WTC11 (cell line): ENCODE measurements at regions of chr2 and their contacts with region 1.

Region 1: GRCh38 chr2:118046634-118047210 is 32.9 kb upstream of the CCDC93 start:
- DNase-seq: no peak
- ATAC-seq: 0 out of 2 replicates have a peak, but pooled peaks have one; percentile 34
- H3K4me3 Mint-ChIP-seq: no peak overlapping the region
- H3K27ac Mint-ChIP-seq: no peak overlapping the region
- H3K4me1 Mint-ChIP-seq: peaks cover 10% of the 10 kb centered on the region
- H3K27me3 Mint-ChIP-seq: peaks cover 5% of the 10 kb centered on the region; the same call in 1 of the 2 replicates
- CTCF ChIP-seq: peak; percentile 33; the same call in 1 of the 2 replicates

Region 2: GRCh38 chr2:118032169-118033013 is 14.3 kb before region 1 on chr2:
- CTCF ChIA-PET with region 1: interaction called, 38 read pairs
- POLR2A ChIA-PET with region 1: no interaction called
- DNase-seq: peak; percentile 38
- ATAC-seq: peak; percentile 74
- H3K4me3 Mint-ChIP-seq: no peak overlapping the region
- H3K27ac Mint-ChIP-seq: no peak overlapping the region
- H3K4me1 Mint-ChIP-seq: peaks cover 9% of the 10 kb centered on the region
- H3K27me3 Mint-ChIP-seq: peaks cover 21% of the 10 kb centered on the region
- CTCF ChIP-seq: peak; percentile 77

Region 3: GRCh38 chr2:118061135-118061955 is 14.6 kb after region 1 on chr2:
- CTCF ChIA-PET with region 1: interaction called, 19 read pairs
- POLR2A ChIA-PET with region 1: no interaction called
- DNase-seq: no peak
- ATAC-seq: peak; percentile 90
- H3K4me3 Mint-ChIP-seq: no peak overlapping the region
- H3K27ac Mint-ChIP-seq: no peak overlapping the region
- H3K4me1 Mint-ChIP-seq: peaks cover 2% of the 10 kb centered on the region; the same call in 1 of the 2 replicates
- H3K27me3 Mint-ChIP-seq: no peaks in the 10 kb centered on the region; the same call in 1 of the 2 replicates
- CTCF ChIP-seq: no peak

Region 4: GRCh38 chr2:118088051-118089024 is 41.6 kb after region 1 on chr2 and contains the start of gene INSIG2:
- CTCF ChIA-PET with region 1: interaction called, 18 read pairs
- POLR2A ChIA-PET with region 1: no interaction called
- DNase-seq: peak; percentile 98
- ATAC-seq: peak; percentile 95
- H3K4me3 Mint-ChIP-seq: peak within 1 kb of the TSS; percentile 68
- H3K27ac Mint-ChIP-seq: peak within 1 kb of the TSS; percentile 91
- H3K4me1 Mint-ChIP-seq: peaks cover 46% of the 10 kb centered on the region
- H3K27me3 Mint-ChIP-seq: no peaks in the 10 kb centered on the region
- CTCF ChIP-seq: no peak
- total RNA-seq, gene INSIG2: 10.7 to 11.9 TPM (median 10.8 TPM) in 3 replicates

Region 5: DNA sequence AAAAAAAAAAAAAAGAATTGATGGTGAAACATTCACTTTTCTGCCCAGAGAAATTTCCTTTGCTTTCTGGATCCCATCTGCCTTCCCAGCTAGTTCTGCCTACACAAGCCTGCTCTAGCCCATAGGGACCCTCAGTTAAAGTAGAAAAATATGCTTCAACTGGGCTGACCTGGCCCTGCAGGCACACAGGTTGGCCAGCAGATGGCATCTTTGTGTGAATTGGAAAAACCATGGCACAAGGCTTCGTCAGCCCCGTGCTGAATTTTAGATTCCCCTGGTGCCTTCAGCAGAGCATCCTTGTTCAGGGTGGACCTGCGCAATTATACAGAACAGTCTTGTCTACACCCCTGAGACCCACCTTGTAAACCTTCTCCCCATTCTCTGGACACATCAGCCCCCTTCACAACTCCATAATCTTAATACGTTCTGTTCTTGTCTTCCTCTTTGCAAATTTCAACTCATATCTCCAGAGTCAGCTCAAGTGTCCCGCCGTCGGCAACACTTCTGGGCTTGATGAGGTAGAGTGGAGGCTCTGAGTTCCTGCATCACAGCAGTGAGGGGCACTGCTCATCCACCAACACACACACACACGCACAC is 156.1 kb after region 1 on chr2:
- CTCF ChIA-PET with region 1: interaction called, 14 read pairs
- POLR2A ChIA-PET with region 1: no interaction called
- DNase-seq: peak; percentile 72
- ATAC-seq: peak; percentile 97
- H3K4me3 Mint-ChIP-seq: no peak overlapping the region
- H3K27ac Mint-ChIP-seq: no peak overlapping the region
- H3K4me1 Mint-ChIP-seq: no peaks in the 10 kb centered on the region
- H3K27me3 Mint-ChIP-seq: peaks cover 13% of the 10 kb centered on the region
- CTCF ChIP-seq: peak; percentile 61